Caco-2 (cell line): ENCODE measurements at regions of chr13 and their contacts with region 1.

Region 1: GRCh38 chr13:102870677-102871415 is 25.0 kb downstream of the ERCC5 start:
- DNase-seq: peak; percentile 70 to 76
- H3K4me3 ChIP-seq: no peak overlapping the region
- H3K4me3 Mint-ChIP-seq: no peak overlapping the region
- H3K27ac Mint-ChIP-seq: no peak overlapping the region
- H3K4me1 ChIP-seq: no peaks in the 10 kb centered on the region
- H3K4me1 Mint-ChIP-seq: no peaks in the 10 kb centered on the region
- H3K27me3 ChIP-seq: no peaks in the 10 kb centered on the region; the same call in 1 of the 2 replicates
- H3K27me3 Mint-ChIP-seq: no peaks in the 10 kb centered on the region
- CTCF ChIP-seq: peak; percentile 76 to 85

Region 2: DNA sequence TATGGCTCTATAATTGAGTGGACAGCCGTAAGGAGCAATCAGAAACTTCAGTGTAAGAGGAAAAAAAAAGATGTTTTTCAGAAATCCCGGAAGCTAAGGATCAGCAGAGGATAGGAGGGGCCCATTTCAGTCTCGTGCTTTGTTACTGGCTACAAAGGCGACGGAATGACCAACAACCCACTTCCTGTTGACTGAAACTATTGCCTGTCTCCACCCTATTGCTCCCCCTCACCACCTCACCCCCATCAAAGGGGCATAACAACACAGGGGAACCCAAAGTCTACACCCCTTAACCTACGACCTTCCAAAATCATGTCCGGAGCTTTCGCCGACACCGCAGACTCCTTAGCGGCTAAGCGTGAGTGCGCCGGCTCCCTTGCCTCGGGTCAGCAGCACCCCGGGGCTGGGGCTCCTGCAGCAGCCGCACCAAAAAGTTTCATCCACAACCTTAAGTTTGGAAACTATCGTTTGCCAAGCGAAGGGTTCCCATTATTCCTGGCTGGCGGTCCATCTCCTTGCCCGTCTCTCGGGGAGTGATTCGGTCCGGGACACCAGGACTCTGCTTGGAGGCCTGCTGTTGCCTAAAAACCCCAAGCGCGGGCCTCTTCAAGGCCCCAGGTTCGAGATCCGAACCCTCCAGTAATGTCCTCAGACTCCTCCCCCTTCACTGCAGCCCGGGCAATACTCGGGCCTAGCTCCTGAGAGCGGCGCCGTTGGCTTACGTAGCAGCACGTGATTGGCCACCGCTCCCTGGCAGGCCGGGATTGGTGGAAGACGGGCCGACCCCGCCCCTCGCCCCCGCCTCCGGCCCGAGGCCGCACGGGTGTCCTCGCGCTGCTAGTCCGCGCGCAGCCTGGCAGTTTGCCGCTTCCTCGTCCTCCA is 274.5 kb before region 1 on chr13 and contains the start of gene TPP2:
- CTCF ChIA-PET with region 1: no interaction called
- POLR2A ChIA-PET with region 1: no interaction called
- intact Hi-C with region 1: no loop called
- DNase-seq: peak; percentile 99
- H3K4me3 ChIP-seq: peak within 1 kb of the TSS; percentile 81
- H3K4me3 Mint-ChIP-seq: peak within 1 kb of the TSS; percentile 86
- H3K27ac Mint-ChIP-seq: peak within 1 kb of the TSS; percentile 91
- H3K4me1 ChIP-seq: peaks cover 3% of the 10 kb centered on the region; the same call in 1 of the 2 replicates
- H3K4me1 Mint-ChIP-seq: peaks cover 23% of the 10 kb centered on the region
- H3K27me3 ChIP-seq: no peaks in the 10 kb centered on the region
- H3K27me3 Mint-ChIP-seq: no peaks in the 10 kb centered on the region
- CTCF ChIP-seq: no peak
- total RNA-seq, gene TPP2: 58.9 and 64.3 TPM in 2 replicates

Region 3: GRCh38 chr13:102707465-102707864 is 163.4 kb before region 1 on chr13:
- CTCF ChIA-PET with region 1: no interaction called
- POLR2A ChIA-PET with region 1: no interaction called
- intact Hi-C with region 1: no loop called
- DNase-seq: no peak
- H3K4me3 ChIP-seq: no peak overlapping the region
- H3K4me3 Mint-ChIP-seq: no peak overlapping the region
- H3K27ac Mint-ChIP-seq: no peak overlapping the region
- H3K4me1 ChIP-seq: peaks cover 27% of the 10 kb centered on the region
- H3K4me1 Mint-ChIP-seq: peaks cover 30% of the 10 kb centered on the region
- H3K27me3 ChIP-seq: no peaks in the 10 kb centered on the region
- H3K27me3 Mint-ChIP-seq: no peaks in the 10 kb centered on the region
- CTCF ChIP-seq: no peak

Region 4: DNA sequence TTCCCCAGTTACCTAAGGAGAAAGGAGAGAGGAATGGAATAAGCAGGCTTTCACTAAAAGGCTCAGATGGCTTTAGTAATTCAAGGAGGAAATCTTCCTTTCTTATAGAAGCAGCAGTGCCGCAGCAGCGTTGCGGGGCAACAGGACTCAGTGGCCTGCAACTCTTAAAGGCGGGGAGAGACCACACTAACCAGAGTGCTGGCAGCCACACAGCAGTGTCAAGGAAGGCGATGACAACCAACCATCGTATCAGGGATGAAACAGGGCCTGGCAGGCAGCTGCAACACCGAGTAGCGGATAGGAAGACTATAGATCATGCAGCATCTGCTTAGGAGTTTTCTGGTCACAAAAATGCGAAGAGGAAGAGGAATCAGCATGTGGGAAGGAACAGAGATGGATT is 81.0 kb after region 1 on chr13:
- CTCF ChIA-PET with region 1: no interaction called
- POLR2A ChIA-PET with region 1: no interaction called
- intact Hi-C with region 1: no loop called
- DNase-seq: no peak
- H3K4me3 ChIP-seq: no peak overlapping the region
- H3K4me3 Mint-ChIP-seq: no peak overlapping the region
- H3K27ac Mint-ChIP-seq: no peak overlapping the region
- H3K4me1 ChIP-seq: no peaks in the 10 kb centered on the region
- H3K4me1 Mint-ChIP-seq: no peaks in the 10 kb centered on the region
- H3K27me3 ChIP-seq: no peaks in the 10 kb centered on the region
- H3K27me3 Mint-ChIP-seq: peaks cover 5% of the 10 kb centered on the region
- CTCF ChIP-seq: no peak

Region 5: DNA sequence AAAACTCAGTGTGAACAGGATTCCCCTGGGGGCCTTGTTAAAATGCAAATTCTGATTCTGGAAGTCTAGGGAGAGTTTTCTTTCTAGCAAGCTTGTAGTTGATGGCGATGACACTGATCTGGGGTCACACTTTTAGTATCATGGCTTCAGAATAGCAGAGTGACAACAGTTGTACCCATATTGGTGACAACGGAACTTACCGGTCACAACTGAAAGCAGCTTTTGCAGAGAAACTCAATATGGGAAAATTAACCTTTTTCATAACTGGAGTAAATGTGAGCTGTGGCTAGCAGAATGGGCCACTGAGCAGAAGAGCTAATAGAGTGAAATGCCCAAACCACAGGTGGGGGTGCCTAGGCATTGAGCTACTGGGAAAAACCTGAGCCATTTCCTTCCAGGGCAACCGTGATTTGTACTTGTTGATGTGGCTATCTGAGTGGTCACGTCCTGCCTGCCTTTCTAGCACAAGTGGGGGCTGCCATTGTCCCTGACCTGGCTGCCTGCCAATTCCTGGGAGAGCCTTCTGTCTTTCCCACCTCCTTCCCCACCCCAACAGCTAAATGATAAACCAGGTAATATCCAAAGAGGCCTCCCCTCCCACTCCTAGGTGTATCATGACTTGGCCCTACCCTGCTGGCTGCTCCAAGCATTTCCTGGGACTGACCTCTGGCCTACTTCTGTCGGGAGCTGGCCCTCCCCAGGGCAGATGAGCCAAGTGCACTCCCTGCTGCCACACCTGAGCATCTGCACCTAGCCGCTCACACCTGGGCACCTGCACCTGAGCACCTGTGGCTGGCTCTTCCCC is 197.1 kb after region 1 on chr13:
- CTCF ChIA-PET with region 1: interaction called, 13 read pairs
- POLR2A ChIA-PET with region 1: no interaction called
- intact Hi-C with region 1: loop called (anchors 1 kb)
- DNase-seq: peak; percentile 40 to 59
- H3K4me3 ChIP-seq: no peak overlapping the region
- H3K4me3 Mint-ChIP-seq: no peak overlapping the region
- H3K27ac Mint-ChIP-seq: no peak overlapping the region
- H3K4me1 ChIP-seq: no peaks in the 10 kb centered on the region
- H3K4me1 Mint-ChIP-seq: no peaks in the 10 kb centered on the region
- H3K27me3 ChIP-seq: no peaks in the 10 kb centered on the region
- H3K27me3 Mint-ChIP-seq: peaks cover 3% of the 10 kb centered on the region
- CTCF ChIP-seq: peak in 1 of 2 experiments; percentile 34

Region 6: DNA sequence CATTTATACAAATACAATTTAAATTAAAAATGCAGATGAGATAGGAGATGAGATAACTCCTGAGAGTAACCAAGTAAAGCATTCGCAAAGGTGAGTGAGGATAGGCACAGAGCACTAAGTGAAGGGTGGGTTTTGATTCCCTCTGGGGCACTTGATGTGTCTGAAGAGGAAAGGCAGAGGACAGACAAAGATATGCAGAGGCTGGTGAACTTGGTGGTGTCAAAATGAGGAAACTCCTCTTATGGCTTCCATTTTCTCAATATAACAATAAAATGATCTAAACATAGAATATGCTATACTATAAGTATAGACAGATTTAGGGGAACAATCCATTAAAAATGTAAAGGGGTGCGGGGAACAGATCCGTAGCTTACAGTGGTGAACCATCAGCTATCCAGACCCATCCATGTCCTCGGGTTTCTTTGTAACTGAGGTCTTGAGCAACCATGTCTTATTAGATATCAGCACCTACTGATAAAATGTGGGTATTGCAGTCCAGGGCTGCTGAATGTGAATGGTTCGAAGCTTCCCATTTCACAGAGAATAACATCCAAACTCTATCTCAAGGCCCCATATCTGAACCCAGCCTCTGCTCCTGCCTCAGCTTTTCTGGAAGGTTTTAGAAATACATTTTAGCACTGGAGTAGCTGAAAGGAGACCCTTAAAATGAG is 269.3 kb after region 1 on chr13:
- CTCF ChIA-PET with region 1: interaction called, 24 read pairs
- POLR2A ChIA-PET with region 1: no interaction called
- intact Hi-C with region 1: loop called (anchors 1 kb)
- DNase-seq: peak in 1 of 2 experiments; percentile 30
- H3K4me3 ChIP-seq: no peak overlapping the region
- H3K4me3 Mint-ChIP-seq: no peak overlapping the region
- H3K27ac Mint-ChIP-seq: no peak overlapping the region
- H3K4me1 ChIP-seq: no peaks in the 10 kb centered on the region
- H3K4me1 Mint-ChIP-seq: peaks cover 7% of the 10 kb centered on the region
- H3K27me3 ChIP-seq: no peaks in the 10 kb centered on the region
- H3K27me3 Mint-ChIP-seq: peaks cover 10% of the 10 kb centered on the region
- CTCF ChIP-seq: peak; percentile 51 to 61